HepG2 (cell line): ENCODE measurements at regions of chr16 and their contacts with region 1.

Region 1: GRCh38 chr16:81077076-81077940 is at the start of gene C16orf46:
- DNase-seq: peak; percentile 96
- ATAC-seq: peak; percentile 96
- H3K4me3 ChIP-seq: peak within 1 kb of the TSS; percentile 81 to 85 (median 81)
- H3K27ac ChIP-seq: peak within 1 kb of the TSS; percentile 85
- H3K4me1 ChIP-seq: peaks cover 15% of the 10 kb centered on the region
- H3K27me3 ChIP-seq: no peaks in the 10 kb centered on the region; a peak in 1 of 5 replicates
- CTCF ChIP-seq: 0 out of 2 replicates have a peak, but pooled peaks have one; percentile 35
- EP300 ChIP-seq: 0 out of 4 replicates have a peak, but pooled peaks of 1 of the 2 experiments have one; percentile 43
- POLR2A ChIP-seq: peak; percentile 93 to 97
- RAD21 ChIP-seq: peak; percentile 37
- total RNA-seq, gene C16orf46: 0.38 and 1.9 TPM in 2 replicates

Region 2: GRCh38 chr16:80990577-80991375 is 86.5 kb before region 1 on chr16:
- CTCF ChIA-PET with region 1: no interaction called
- POLR2A ChIA-PET with region 1: interaction called, 5 read pairs
- in situ Hi-C with region 1: no loop called
- intact Hi-C with region 1: loop called (anchors 1 kb)
- DNase-seq: no peak
- ATAC-seq: peak; percentile 8
- H3K4me3 ChIP-seq: no peak overlapping the region
- H3K27ac ChIP-seq: peak overlapping the region; percentile 65
- H3K4me1 ChIP-seq: peaks cover 80% of the 10 kb centered on the region
- H3K27me3 ChIP-seq: no peaks in the 10 kb centered on the region
- CTCF ChIP-seq: no peak
- EP300 ChIP-seq: no peak
- POLR2A ChIP-seq: no peak
- RAD21 ChIP-seq: no peak

Region 3: GRCh38 chr16:81006814-81007696 is 70.3 kb before region 1 on chr16 and contains the starts of genes CENPN and CMC2:
- CTCF ChIA-PET with region 1: no interaction called
- POLR2A ChIA-PET with region 1: interaction called, 13 read pairs
- in situ Hi-C with region 1: no loop called
- intact Hi-C with region 1: no loop called
- DNase-seq: peak; percentile 98
- ATAC-seq: peak; percentile 91
- H3K4me3 ChIP-seq: peak within 1 kb of the TSS; percentile 90 to 99 (median 90)
- H3K27ac ChIP-seq: peak within 1 kb of the TSS; percentile 99
- H3K4me1 ChIP-seq: peaks cover 35% of the 10 kb centered on the region
- H3K27me3 ChIP-seq: no peaks in the 10 kb centered on the region; a peak in 1 of 5 replicates
- CTCF ChIP-seq: peak; percentile 47; the same call in 1 of the 2 replicates
- EP300 ChIP-seq: peak in 1 of 2 experiments; percentile 4; a peak in 1 of 4 replicates
- POLR2A ChIP-seq: peak; percentile 76 to 80
- RAD21 ChIP-seq: no peak; the same call in 1 of the 2 replicates
- total RNA-seq, gene CENPN: 129 and 193 TPM in 2 replicates
- total RNA-seq, gene CMC2: 129 and 147 TPM in 2 replicates

Region 4: DNA sequence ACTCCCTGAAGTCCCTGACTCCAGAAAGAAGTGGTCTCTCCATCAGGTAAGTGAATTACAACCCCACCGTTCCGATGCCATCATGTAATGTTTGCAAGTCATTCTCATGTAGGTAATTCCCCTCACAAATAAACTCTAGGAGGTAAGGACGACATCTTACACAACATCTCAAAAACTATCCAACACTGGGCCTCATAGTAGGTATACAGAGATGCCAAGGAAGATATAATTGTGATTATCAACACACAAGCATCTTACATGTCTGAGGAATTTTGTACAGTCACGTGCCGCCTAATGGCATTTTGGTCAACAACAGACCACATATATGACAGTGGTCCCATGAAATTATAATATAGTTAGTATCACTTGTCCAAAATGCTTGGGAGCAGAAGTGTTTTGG is 11.5 kb after region 1 on chr16:
- CTCF ChIA-PET with region 1: no interaction called
- POLR2A ChIA-PET with region 1: interaction called, 11 read pairs
- in situ Hi-C with region 1: no loop called
- intact Hi-C with region 1: no loop called
- DNase-seq: no peak
- ATAC-seq: no peak
- H3K4me3 ChIP-seq: no peak overlapping the region
- H3K27ac ChIP-seq: no peak overlapping the region
- H3K4me1 ChIP-seq: peaks cover 33% of the 10 kb centered on the region
- H3K27me3 ChIP-seq: no peaks in the 10 kb centered on the region
- CTCF ChIP-seq: no peak
- EP300 ChIP-seq: no peak
- POLR2A ChIP-seq: no peak
- RAD21 ChIP-seq: no peak

Region 5: GRCh38 chr16:81095953-81096717 is 18.8 kb after region 1 on chr16 and contains the start of gene GCSH:
- CTCF ChIA-PET with region 1: no interaction called
- POLR2A ChIA-PET with region 1: interaction called, 13 read pairs
- in situ Hi-C with region 1: no loop called
- intact Hi-C with region 1: loop called (anchors 1 kb)
- DNase-seq: peak; percentile 98
- ATAC-seq: peak; percentile 98
- H3K4me3 ChIP-seq: peak within 1 kb of the TSS; percentile 75 to 86 (median 83)
- H3K27ac ChIP-seq: peak within 1 kb of the TSS; percentile 88
- H3K4me1 ChIP-seq: peaks cover 52% of the 10 kb centered on the region
- H3K27me3 ChIP-seq: no peaks in the 10 kb centered on the region; a peak in 1 of 5 replicates
- CTCF ChIP-seq: no peak; the same call in 1 of the 2 replicates
- EP300 ChIP-seq: no peak
- POLR2A ChIP-seq: peak; percentile 67 to 82; a peak in 3 of 4 replicates
- RAD21 ChIP-seq: peak; percentile 66
- total RNA-seq, gene GCSH: 103 and 117 TPM in 2 replicates

Region 6: DNA sequence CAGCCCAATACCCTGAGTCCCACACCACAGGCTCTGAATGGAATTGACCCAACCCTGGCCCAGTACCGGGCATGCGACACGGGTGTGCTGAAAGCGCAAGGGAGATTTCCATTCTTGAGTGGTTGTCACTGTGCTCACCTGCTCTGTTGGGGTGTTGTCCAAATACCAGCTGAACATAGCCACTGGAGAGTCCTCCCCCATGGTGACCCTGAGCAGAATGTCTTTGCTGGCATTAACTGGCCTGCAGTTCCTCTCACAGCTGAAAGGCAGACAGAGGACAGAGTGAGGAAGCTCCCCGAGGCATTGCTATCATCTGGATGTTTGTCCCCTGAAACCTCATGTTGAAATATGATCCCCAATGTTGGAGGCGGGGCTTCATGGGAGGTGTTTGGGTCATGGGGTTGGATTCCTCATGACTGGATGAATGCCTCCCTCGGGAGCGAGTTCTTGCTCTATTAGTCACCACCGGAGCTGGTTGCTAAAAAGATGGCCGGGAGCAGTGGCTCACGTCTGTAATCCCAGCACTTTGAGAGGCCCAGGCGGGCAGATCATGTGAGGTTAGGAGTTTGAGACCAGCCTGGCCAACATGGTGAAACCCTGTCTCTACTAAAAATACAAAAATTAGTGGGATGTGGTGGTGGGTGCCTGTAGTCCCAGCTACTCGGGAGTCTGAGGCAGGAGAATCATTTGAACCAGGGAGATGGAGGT is 103.9 kb after region 1 on chr16:
- CTCF ChIA-PET with region 1: no interaction called
- POLR2A ChIA-PET with region 1: interaction called, 14 read pairs
- in situ Hi-C with region 1: no loop called
- intact Hi-C with region 1: no loop called
- DNase-seq: peak; percentile 98
- ATAC-seq: peak; percentile 94
- H3K4me3 ChIP-seq: peak overlapping the region in 2 of 3 experiments; percentile 17 to 44; a peak in 3 of 6 replicates
- H3K27ac ChIP-seq: peak overlapping the region; percentile 4
- H3K4me1 ChIP-seq: peaks cover 34% of the 10 kb centered on the region
- H3K27me3 ChIP-seq: peaks cover 0 to 1% of the 10 kb centered on the region in 2 experiments; a peak in 1 of 5 replicates
- CTCF ChIP-seq: no peak
- EP300 ChIP-seq: no peak; a peak in 1 of 4 replicates
- POLR2A ChIP-seq: no peak
- RAD21 ChIP-seq: no peak